CD4-positive, alpha-beta memory T cell (primary cell): ENCODE measurements at regions of chr7 and their contacts with region 1.

Region 1: DNA sequence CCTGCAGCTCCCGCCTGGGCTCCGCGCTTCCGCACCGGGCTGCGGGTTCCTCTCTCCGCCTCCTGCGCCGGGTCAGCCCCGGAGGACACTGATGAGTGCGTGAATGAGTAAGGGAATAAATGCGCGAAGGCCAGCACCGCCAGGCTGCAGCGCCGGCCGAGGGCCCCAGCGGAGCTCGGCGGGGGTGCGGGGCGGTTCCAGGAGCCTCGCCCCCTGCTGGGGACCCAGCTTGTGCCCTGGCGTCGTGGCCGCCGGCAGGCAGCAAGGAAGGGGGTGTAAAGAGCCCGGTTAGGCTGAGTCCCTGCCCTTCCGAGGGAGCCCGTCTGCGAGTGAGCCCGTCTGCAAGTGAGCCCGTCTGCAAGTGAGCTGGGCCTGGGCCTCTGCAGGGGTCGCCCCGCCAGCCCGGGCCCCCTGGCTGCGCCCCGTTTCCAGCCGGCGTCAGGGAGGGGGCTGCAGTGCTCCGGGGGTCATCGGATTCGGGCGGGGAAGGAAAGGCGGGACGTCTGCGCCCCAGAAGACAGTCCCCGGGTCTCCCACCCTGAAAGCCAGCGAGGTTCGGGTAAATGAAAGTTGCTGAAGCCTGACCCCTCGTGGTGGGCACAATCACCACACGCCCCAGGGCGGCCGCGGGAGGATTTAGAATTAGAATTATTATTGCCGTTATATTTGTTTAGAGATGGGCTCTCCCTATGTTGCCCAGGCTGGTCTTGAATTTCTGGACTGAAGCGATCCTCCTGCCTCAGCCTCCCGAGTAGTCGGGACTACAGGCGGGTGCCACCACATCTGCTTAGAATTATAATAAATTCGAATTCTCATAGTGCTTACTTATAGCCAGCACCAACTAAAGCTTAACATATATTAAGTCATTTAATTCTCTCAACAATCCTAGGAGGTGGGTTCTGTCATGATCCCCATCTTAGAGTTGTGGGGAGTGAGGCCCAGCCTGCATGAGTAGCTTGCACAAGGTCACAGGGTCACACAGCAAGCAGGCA is 8.6 kb upstream of the CRYGN start:
- DNase-seq: peak; percentile 77 to 87 (median 84)
- H3K4me3 ChIP-seq: peak overlapping the region; percentile 11 to 70
- H3K4me3 Mint-ChIP-seq: peak overlapping the region; percentile 80 to 92 (median 83)
- H3K27ac ChIP-seq: peak overlapping the region; percentile 58
- H3K27ac Mint-ChIP-seq: peak overlapping the region in 6 of 7 donors; percentile 64 to 82 (median 78)
- H3K4me1 ChIP-seq: peaks cover 4% of the 10 kb centered on the region
- H3K4me1 Mint-ChIP-seq: peaks cover 0 to 24% (median under 1%) of the 10 kb centered on the region in 4 donors
- H3K27me3 ChIP-seq: no peaks in the 10 kb centered on the region
- H3K27me3 Mint-ChIP-seq: peaks cover 0 to 1% of the 10 kb centered on the region in 2 donors

Region 2: DNA sequence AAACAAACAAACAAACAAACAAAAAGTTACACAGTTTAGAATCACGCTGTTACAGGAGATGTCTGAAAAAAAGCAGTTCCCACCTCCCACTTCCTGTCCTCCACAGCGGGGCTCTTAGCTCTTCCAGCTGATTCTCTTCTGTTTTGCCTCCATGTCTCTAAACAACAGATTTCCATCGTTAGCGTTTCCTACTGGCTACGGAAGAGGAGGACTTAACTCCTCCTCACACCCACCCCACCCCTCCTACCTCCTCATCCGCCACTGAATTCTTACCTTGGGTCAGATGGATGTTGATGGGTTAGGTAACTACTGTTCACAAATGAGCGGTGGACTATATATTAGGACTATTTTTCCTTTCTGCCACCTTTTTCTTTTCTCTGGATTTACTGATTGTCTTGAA is 143.7 kb before region 1 on chr7:
- CTCF ChIA-PET with region 1: interaction called, 11 read pairs
- POLR2A ChIA-PET with region 1: no interaction called
- intact Hi-C with region 1: no loop called
- DNase-seq: no peak
- H3K4me3 ChIP-seq: no peak overlapping the region
- H3K4me3 Mint-ChIP-seq: peak overlapping the region in 6 of 8 donors; percentile 35 to 71 (median 56)
- H3K27ac ChIP-seq: no peak overlapping the region
- H3K27ac Mint-ChIP-seq: peak overlapping the region in 2 of 7 donors; percentile 41 to 69
- H3K4me1 ChIP-seq: peaks cover 5% of the 10 kb centered on the region
- H3K4me1 Mint-ChIP-seq: peaks cover 3 to 12% (median 8%) of the 10 kb centered on the region in 4 donors
- H3K27me3 ChIP-seq: peaks cover 7% of the 10 kb centered on the region
- H3K27me3 Mint-ChIP-seq: peaks cover 23 to 31% of the 10 kb centered on the region in 2 donors

Region 3: DNA sequence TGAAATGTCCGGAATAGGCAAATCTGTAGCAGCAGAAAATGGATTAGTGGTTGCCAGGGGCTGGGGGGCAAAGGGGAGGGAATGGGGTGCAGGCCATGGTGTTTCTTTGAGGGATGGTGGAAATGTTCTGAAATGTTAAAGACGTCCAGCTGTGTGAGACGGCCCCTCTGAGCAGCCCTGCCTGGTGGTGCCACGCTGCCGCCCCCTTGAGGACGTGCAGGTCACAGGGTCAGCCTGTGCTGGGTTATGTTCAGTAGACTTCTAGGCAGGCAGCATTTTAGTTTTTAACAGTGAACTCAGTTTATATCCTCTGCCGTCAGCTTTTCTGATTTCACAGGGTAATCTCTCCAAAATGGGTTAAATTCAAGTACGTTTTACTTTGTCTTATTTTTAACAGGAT is 97.5 kb before region 1 on chr7:
- CTCF ChIA-PET with region 1: interaction called, 92 read pairs
- POLR2A ChIA-PET with region 1: interaction called, 8 read pairs
- intact Hi-C with region 1: loop called (anchors 1 kb)
- DNase-seq: no peak
- H3K4me3 ChIP-seq: no peak overlapping the region
- H3K4me3 Mint-ChIP-seq: peak overlapping the region; percentile 32 to 82 (median 73)
- H3K27ac ChIP-seq: peak overlapping the region; percentile 65
- H3K27ac Mint-ChIP-seq: peak overlapping the region; percentile 78 to 95 (median 89)
- H3K4me1 ChIP-seq: peaks cover 38% of the 10 kb centered on the region
- H3K4me1 Mint-ChIP-seq: peaks cover 33 to 61% (median 47%) of the 10 kb centered on the region in 4 donors
- H3K27me3 ChIP-seq: no peaks in the 10 kb centered on the region
- H3K27me3 Mint-ChIP-seq: no peaks in the 10 kb centered on the region

Region 4: DNA sequence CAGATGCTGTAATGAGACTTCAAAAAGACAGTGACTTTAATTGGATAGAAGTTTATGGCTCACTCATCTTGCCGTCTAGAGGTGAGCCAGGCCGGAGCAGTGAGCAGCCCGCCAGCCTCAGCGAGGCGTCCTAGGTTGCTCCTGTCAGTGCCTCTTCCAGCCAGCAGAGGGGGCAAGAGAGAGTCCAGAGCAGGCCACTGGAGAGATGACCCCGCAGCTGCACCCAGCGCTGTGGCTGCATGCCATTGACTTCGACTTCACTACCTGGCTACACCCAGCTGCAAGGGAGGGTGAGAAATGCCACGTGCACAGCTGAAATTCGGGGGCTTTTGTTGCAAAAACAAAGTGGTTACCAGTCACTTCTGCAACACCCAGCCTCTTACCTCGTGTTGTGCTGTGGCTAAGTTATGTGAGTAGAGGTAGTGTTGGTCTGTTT is 80.4 kb before region 1 on chr7:
- CTCF ChIA-PET with region 1: interaction called, 398 read pairs
- POLR2A ChIA-PET with region 1: interaction called, 18 read pairs
- intact Hi-C with region 1: loop called (anchors 1 kb)
- DNase-seq: peak; percentile 74 to 81 (median 75)
- H3K4me3 ChIP-seq: no peak overlapping the region
- H3K4me3 Mint-ChIP-seq: peak overlapping the region in 1 of 8 donors; percentile 38
- H3K27ac ChIP-seq: no peak overlapping the region
- H3K27ac Mint-ChIP-seq: peak overlapping the region in 6 of 7 donors; percentile 44 to 92 (median 88)
- H3K4me1 ChIP-seq: peaks cover 10% of the 10 kb centered on the region
- H3K4me1 Mint-ChIP-seq: peaks cover 6 to 16% (median 10%) of the 10 kb centered on the region in 4 donors
- H3K27me3 ChIP-seq: no peaks in the 10 kb centered on the region
- H3K27me3 Mint-ChIP-seq: no peaks in the 10 kb centered on the region

Region 5: DNA sequence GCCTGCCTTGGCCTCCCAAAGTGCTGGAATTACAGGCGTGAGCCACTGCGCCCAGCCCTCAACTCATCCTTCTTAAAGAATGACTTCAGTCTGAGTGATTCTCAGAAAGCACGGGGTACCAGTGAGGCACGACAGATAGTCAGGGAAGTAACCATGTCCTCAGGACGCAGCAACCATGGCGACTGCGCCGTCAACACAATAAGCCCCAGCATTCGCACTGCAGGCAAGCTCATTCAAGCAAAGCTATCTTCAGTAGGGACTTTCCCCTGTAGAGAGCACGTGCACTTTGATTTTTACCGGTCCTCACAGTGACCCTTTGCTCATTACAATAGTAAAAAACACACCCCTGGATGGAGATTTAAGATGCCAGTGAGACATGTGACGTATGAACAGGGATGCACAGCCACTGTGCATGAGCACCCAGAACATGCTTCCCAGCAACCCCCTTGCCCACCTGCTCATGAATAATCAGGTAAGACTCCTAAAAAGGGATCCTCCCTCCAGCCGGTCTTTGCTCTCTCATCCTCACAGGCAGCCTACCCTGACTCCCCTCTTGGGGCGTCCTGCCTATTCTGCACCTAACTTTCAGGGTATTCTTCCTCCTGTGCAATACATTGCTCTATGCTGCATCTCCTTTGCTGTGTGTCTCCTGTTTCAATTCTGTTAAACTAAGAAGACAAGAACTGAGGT is 47.8 kb before region 1 on chr7:
- CTCF ChIA-PET with region 1: interaction called, 15 read pairs
- POLR2A ChIA-PET with region 1: interaction called, 6 read pairs
- intact Hi-C with region 1: no loop called
- DNase-seq: peak in 3 of 5 donors; percentile 37 to 54 (median 51)
- H3K4me3 ChIP-seq: no peak overlapping the region
- H3K4me3 Mint-ChIP-seq: no peak overlapping the region
- H3K27ac ChIP-seq: no peak overlapping the region
- H3K27ac Mint-ChIP-seq: peak overlapping the region; percentile 11 to 94 (median 64)
- H3K4me1 ChIP-seq: peaks cover 42% of the 10 kb centered on the region
- H3K4me1 Mint-ChIP-seq: peaks cover 14 to 80% (median 24%) of the 10 kb centered on the region in 4 donors
- H3K27me3 ChIP-seq: no peaks in the 10 kb centered on the region
- H3K27me3 Mint-ChIP-seq: no peaks in the 10 kb centered on the region

Region 6: DNA sequence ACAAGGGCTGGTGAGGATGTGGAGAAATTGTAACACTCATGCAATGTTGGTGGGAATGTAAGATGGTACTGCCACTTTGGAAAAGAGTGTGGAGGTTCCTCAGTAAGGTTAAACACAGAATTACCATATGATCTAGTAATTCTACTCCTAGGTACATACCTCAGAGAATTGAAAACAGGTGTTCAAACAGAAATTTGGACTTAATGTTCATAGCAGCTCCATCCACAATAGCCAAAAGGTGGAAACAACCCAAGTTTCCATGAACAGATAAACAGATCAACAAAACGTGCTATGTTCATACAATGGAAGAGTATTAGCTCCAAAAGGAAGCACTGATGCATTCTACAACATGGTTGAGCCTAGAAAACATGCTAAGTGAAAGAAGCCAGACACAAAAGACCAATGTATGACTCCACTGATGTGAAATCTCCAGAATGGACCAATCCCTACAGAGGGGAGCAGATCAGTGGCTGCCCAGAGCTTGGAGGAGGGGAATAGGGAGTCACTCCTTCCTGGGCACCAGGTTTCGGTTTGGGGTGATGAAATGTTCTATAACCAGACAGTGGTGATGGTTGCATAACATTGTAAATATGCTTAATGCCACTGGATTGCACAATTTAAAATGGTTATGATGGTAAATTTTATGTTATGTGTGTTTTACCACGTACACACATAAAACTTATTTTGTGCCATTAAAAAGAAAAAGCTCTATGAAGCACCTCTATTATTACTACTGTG is 33.0 kb before region 1 on chr7:
- CTCF ChIA-PET with region 1: interaction called, 10 read pairs
- POLR2A ChIA-PET with region 1: interaction called, 17 read pairs
- intact Hi-C with region 1: no loop called
- DNase-seq: no peak
- H3K4me3 ChIP-seq: no peak overlapping the region
- H3K4me3 Mint-ChIP-seq: no peak overlapping the region
- H3K27ac ChIP-seq: no peak overlapping the region
- H3K27ac Mint-ChIP-seq: peak overlapping the region in 1 of 7 donors; percentile 9
- H3K4me1 ChIP-seq: peaks cover 17% of the 10 kb centered on the region
- H3K4me1 Mint-ChIP-seq: peaks cover 16 to 41% (median 24%) of the 10 kb centered on the region in 4 donors
- H3K27me3 ChIP-seq: no peaks in the 10 kb centered on the region
- H3K27me3 Mint-ChIP-seq: peaks cover 1 to 4% of the 10 kb centered on the region in 2 donors

Region 7: GRCh38 chr7:151759591-151760042 is 311.1 kb after region 1 on chr7:
- CTCF ChIA-PET with region 1: interaction called, 13 read pairs
- POLR2A ChIA-PET with region 1: no interaction called
- intact Hi-C with region 1: loop called (anchors 5 kb)
- DNase-seq: peak; percentile 50 to 59 (median 58)
- H3K4me3 ChIP-seq: no peak overlapping the region
- H3K4me3 Mint-ChIP-seq: no peak overlapping the region
- H3K27ac ChIP-seq: no peak overlapping the region
- H3K27ac Mint-ChIP-seq: peak overlapping the region in 6 of 7 donors; percentile 41 to 79 (median 56)
- H3K4me1 ChIP-seq: peaks cover 19% of the 10 kb centered on the region
- H3K4me1 Mint-ChIP-seq: peaks cover 9 to 37% (median 29%) of the 10 kb centered on the region in 4 donors
- H3K27me3 ChIP-seq: no peaks in the 10 kb centered on the region
- H3K27me3 Mint-ChIP-seq: no peaks in the 10 kb centered on the region